ENCODE measurements at regions of chr1 and their contacts with region 1.

Region 1: GRCh38 chr1:35564037-35564883 is 6.7 kb downstream of the NCDN start:
- DNase-seq: peak; percentile 38 to 60
- ATAC-seq: peak in 1 of 2 donors; percentile 43
- H3K4me3 ChIP-seq: no peak overlapping the region
- H3K27ac ChIP-seq: no peak overlapping the region
- H3K4me1 ChIP-seq: peaks cover 4 to 16% of the 10 kb centered on the region in 2 donors
- H3K27me3 ChIP-seq: peaks cover 0 to under 1% (median 0%) of the 10 kb centered on the region in 3 donors
- CTCF ChIP-seq: peak in 4 of 5 experiments; percentile 63 to 75 (median 66)
- POLR2A ChIP-seq: no peak

Region 2: DNA sequence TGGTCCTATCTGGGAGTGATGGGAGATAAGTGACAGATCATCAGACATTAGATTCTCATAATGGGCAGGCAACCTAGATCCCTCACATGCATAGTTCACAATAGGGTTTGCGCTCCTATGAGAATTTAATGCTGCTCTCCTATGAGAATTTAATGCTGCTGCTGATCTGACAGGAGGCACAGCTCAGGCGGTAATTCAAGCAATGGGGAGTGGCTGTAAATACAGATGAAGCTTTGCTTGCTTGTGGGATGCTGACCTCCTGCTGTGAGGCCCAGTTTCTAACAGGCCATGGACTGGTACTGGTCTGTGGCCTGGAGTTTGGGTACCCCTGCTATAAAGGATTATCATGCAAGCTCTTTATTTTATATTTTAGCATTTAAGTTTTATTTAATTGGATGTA is 223.7 kb before region 1 on chr1:
- in situ Hi-C with region 1: no loop called
- intact Hi-C with region 1: no loop called
- DNase-seq: no peak
- ATAC-seq: no peak
- H3K4me3 ChIP-seq: no peak overlapping the region
- H3K27ac ChIP-seq: no peak overlapping the region
- H3K4me1 ChIP-seq: no peaks in the 10 kb centered on the region
- H3K27me3 ChIP-seq: no peaks in the 10 kb centered on the region
- CTCF ChIP-seq: no peak
- POLR2A ChIP-seq: no peak

Region 3: DNA sequence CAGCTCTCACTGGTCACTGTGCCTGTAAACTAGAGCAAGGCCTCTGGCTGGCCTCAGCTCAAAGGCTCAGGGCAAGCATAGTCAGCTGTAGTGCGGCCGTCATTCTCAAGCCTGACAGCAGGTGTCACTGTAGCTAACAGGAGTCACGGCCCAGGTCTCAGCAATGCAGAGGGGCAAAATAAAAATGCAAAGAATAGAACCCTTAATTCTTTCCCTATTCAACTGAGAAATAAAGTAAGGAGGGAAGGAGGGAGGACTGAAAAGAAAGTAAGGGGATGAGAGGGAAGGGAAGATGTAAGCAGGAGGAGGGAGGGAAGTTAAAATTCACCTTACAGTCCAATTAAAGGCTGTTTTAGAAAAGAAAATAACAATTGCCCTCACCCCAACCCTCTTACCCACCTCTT is 113.1 kb before region 1 on chr1:
- in situ Hi-C with region 1: loop called (anchors 5 kb)
- intact Hi-C with region 1: no loop called
- DNase-seq: peak; percentile 29 to 63
- ATAC-seq: peak; percentile 79 to 85
- H3K4me3 ChIP-seq: no peak overlapping the region
- H3K27ac ChIP-seq: no peak overlapping the region
- H3K4me1 ChIP-seq: peaks cover 8 to 9% of the 10 kb centered on the region in 2 donors
- H3K27me3 ChIP-seq: no peaks in the 10 kb centered on the region
- CTCF ChIP-seq: peak; percentile 67 to 83 (median 76)
- POLR2A ChIP-seq: no peak

Region 4: DNA sequence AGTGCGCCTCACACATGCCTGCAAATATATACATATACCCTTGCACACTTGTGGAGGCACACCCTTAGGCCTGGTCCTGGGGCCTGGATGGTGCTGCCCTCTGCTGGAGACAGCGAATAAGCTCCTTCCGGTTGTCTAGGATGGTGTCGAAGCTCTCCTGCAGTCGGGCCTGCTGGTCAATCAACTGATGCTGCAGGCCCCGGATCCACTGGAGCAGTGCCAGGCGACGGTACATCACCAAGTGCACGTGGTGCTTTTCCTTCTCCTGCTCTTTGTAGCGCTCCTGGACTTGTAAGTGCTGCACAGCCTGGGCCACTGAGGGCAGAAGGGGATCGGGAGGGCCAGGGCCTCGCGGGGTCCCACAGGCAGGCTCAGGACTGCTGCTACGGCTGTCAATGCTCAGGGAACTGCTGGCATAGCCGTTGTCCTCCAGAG is 151.3 kb after region 1 on chr1:
- in situ Hi-C with region 1: loop called in 3 of 4 experiments (anchors 5 to 10 kb)
- intact Hi-C with region 1: loop called (anchors 5 kb)
- DNase-seq: peak in 1 of 2 donors; percentile 48
- ATAC-seq: peak in 1 of 2 donors; percentile 39
- H3K4me3 ChIP-seq: no peak overlapping the region
- H3K27ac ChIP-seq: no peak overlapping the region
- H3K4me1 ChIP-seq: peaks cover 21 to 22% of the 10 kb centered on the region in 2 donors
- H3K27me3 ChIP-seq: no peaks in the 10 kb centered on the region
- CTCF ChIP-seq: peak; percentile 33 to 74 (median 65)
- POLR2A ChIP-seq: no peak

Region 5: GRCh38 chr1:35726450-35727433 is 162.5 kb after region 1 on chr1:
- in situ Hi-C with region 1: loop called (anchors 5 to 10 kb)
- intact Hi-C with region 1: loop called (anchors 1 kb)
- DNase-seq: peak in 1 of 2 donors; percentile 31
- ATAC-seq: peak; percentile 79 to 98
- H3K4me3 ChIP-seq: no peak overlapping the region
- H3K27ac ChIP-seq: no peak overlapping the region
- H3K4me1 ChIP-seq: no peaks in the 10 kb centered on the region
- H3K27me3 ChIP-seq: no peaks in the 10 kb centered on the region
- CTCF ChIP-seq: peak; percentile 67 to 90 (median 73)
- POLR2A ChIP-seq: no peak

Region 6: GRCh38 chr1:35769759-35770446 is 205.6 kb after region 1 on chr1 and contains the start of gene CLSPN:
- in situ Hi-C with region 1: no loop called
- intact Hi-C with region 1: loop called (anchors 1 kb)
- DNase-seq: peak; percentile 80 to 87
- ATAC-seq: peak; percentile 96 to 98
- H3K4me3 ChIP-seq: peak within 1 kb of the TSS; percentile 50 to 94 (median 68)
- H3K27ac ChIP-seq: peak within 1 kb of the TSS in 3 of 4 donors; percentile 50 to 58 (median 56)
- H3K4me1 ChIP-seq: peaks cover 0 to 6% of the 10 kb centered on the region in 2 donors
- H3K27me3 ChIP-seq: peaks cover 0 to 3% (median 0%) of the 10 kb centered on the region in 3 donors
- CTCF ChIP-seq: no peak
- POLR2A ChIP-seq: peak in 1 of 2 donors; percentile 31
- total RNA-seq, gene CLSPN: 0.27 to 0.46 TPM in 2 of 4 donors, not detected in the others

Measured in gastrocnemius medialis (tissue), 4 donors.